B cell (primary cell): ENCODE measurements at regions of chr20 and their contacts with region 1.

Region 1: DNA sequence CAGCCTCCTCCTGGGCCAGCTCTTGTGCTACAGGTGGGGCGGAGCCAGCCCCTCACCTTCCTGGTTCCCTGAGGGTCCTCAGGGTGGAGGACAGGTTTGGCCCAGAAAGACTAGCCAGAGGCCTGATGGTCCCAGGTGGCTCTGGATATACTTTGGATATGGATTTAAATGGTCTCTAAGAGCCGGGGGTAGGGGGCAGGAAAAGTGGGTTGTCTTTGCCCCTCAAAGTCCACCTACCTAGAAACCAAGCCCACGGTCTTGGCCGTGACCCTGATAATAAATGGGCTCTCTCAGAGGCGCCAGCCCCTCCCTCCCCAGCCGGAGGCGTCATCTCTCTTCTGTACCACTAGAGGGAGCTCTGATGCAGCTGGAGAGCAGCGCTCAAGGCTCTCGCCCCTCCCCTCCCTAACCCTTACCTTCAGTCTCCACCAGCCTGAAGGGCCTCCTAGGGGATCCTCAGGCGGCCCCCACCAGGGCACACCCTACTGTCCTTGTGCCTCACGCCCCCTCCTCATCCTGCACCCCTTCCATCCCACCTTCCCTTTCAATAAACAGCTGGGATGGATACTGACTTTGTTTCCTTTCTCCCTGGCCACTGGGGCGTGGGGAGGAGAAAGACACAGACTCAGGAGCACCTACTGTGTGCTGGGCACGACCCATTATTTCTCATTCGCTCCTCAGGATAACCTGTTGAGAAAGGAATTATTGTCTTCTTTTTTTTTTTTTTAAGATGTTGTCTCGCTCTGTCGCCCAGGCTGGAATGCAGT is 7.6 kb downstream of the NRSN2 start:
- DNase-seq: peak; percentile 89
- ATAC-seq: peak; percentile 100
- H3K4me3 ChIP-seq: no peak overlapping the region
- H3K4me3 Mint-ChIP-seq: no peak overlapping the region
- H3K27ac ChIP-seq: no peak overlapping the region
- H3K27ac Mint-ChIP-seq: no peak overlapping the region
- H3K4me1 ChIP-seq: peaks cover 3 to 8% of the 10 kb centered on the region in 2 donors
- H3K4me1 Mint-ChIP-seq: peaks cover 11% of the 10 kb centered on the region
- H3K27me3 ChIP-seq: no peaks in the 10 kb centered on the region
- H3K27me3 Mint-ChIP-seq: no peaks in the 10 kb centered on the region
- CTCF ChIP-seq: peak; percentile 91

Region 2: DNA sequence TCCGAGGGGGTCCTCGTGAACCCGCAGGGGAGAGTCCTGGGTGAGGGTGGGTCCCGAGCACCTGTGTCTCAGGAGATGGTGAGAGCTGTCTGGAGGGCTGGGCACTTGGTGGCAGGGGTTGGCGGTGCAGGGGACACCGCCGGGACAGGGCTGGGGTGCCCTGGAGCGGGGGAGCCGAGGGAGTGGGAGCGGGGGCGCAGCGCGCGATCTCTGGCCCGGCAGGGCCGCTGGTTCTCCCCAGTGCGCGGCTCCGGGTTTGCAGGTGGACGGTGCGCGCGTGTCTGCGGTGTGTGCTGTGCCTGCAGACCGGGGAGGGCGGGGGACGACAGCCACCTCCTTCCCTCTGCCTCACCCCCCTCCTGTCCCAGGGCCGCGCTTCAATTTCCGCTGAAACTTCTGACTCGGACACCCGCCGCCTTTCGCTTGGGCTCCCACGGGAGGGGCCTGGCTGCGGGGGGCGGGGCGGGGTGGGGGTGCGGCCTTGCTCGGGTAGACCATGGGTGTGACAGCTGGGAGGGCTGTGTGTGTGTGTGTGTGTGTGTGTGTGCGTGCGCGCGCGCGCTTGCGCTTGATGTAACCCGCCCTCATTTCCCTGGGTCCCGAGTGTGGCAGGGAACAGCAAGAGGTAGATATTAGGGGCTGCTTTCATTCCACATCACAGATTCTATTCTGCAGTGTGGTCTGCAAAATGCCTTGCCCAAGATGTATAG is 27.3 kb after region 1 on chr20:
- CTCF ChIA-PET with region 1: interaction called, 10 read pairs
- POLR2A ChIA-PET with region 1: interaction called, 6 read pairs
- intact Hi-C with region 1: loop called (anchors 2 kb)
- DNase-seq: peak; percentile 85
- ATAC-seq: peak; percentile 78
- H3K4me3 ChIP-seq: peak overlapping the region; percentile 3 to 79 (median 74)
- H3K4me3 Mint-ChIP-seq: peak overlapping the region; percentile 83
- H3K27ac ChIP-seq: peak overlapping the region; percentile 41 to 83
- H3K27ac Mint-ChIP-seq: peak overlapping the region; percentile 87
- H3K4me1 ChIP-seq: peaks cover 9% of the 10 kb centered on the region in 2 donors
- H3K4me1 Mint-ChIP-seq: peaks cover 19% of the 10 kb centered on the region
- H3K27me3 ChIP-seq: no peaks in the 10 kb centered on the region
- H3K27me3 Mint-ChIP-seq: no peaks in the 10 kb centered on the region
- CTCF ChIP-seq: no peak

Region 3: DNA sequence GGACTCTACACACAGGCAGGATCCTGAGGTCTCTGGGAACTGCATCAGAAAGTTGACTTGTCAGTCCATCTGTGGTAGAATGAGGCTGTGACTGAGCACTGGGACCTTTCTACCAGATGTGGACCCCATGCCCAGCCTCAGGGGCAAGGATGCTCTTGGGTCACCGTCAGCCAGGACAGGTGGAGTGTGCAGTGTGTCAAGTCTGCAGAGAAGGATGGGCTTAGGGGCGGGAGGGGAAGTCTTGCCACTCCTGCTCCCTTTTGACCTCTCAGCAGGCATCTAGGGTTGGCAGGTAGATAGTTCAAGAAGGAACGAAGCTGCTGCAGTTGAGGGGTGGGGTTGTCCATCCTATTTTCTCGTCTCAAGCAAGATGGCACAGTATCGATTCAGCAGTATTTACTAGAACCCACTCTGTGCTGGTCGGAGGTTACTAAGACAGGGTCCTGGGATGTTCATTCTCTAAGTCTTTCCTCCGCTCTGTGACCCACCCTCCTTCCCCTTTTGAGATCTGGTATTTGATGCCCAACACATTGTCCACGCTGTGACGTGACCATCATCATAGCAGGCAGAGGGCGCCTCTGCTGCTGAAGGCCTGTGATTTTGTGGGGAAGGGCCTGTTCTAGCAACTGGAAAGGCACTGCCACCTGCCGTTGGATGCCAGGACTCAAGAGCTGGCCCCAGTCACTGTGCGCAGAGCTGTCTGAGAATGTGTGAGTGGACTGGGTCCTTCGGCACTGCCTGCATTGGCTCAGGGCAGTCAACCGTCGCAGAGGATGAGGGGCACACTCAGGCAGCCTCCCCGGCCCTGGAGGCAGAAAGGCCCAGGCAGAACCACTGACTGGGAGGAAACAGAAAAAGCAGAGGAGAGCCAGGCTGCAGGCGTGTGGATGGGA is 76.8 kb after region 1 on chr20:
- CTCF ChIA-PET with region 1: interaction called, 7 read pairs
- POLR2A ChIA-PET with region 1: no interaction called
- intact Hi-C with region 1: loop called (anchors 1 kb)
- DNase-seq: peak; percentile 30
- ATAC-seq: no peak
- H3K4me3 ChIP-seq: no peak overlapping the region
- H3K4me3 Mint-ChIP-seq: no peak overlapping the region
- H3K27ac ChIP-seq: no peak overlapping the region
- H3K27ac Mint-ChIP-seq: peak overlapping the region; percentile 73
- H3K4me1 ChIP-seq: peaks cover 10 to 23% of the 10 kb centered on the region in 2 donors
- H3K4me1 Mint-ChIP-seq: peaks cover 35% of the 10 kb centered on the region
- H3K27me3 ChIP-seq: no peaks in the 10 kb centered on the region
- H3K27me3 Mint-ChIP-seq: no peaks in the 10 kb centered on the region
- CTCF ChIP-seq: no peak

Region 4: DNA sequence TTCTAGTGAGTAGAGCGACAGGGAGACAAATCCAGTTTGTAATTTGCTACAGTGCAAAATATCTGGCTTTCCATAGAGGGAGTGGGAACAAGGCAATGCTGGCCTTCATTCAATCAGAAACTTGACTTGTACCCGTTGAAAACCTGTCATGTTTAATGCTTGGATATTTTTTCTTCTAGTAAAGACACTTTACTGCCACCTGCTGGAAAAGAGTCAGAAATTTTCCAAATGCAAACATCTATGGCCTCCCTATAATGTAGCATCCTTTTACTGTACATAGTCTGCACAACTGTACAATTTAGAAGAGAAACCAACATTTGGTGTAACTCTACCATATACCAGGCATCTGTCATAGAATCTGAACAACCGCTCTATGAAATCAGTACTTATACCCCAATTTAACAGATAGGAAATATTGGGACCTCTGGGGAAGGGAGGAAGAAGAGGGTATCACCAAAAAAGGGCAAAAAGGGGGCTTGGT is 124.5 kb after region 1 on chr20:
- CTCF ChIA-PET with region 1: interaction called, 169 read pairs
- POLR2A ChIA-PET with region 1: interaction called, 4 read pairs
- intact Hi-C with region 1: loop called (anchors 1 kb)
- DNase-seq: peak; percentile 79
- ATAC-seq: peak; percentile 64
- H3K4me3 ChIP-seq: no peak overlapping the region
- H3K4me3 Mint-ChIP-seq: no peak overlapping the region
- H3K27ac ChIP-seq: no peak overlapping the region
- H3K27ac Mint-ChIP-seq: peak overlapping the region; percentile 50
- H3K4me1 ChIP-seq: no peaks in the 10 kb centered on the region
- H3K4me1 Mint-ChIP-seq: peaks cover 2% of the 10 kb centered on the region
- H3K27me3 ChIP-seq: no peaks in the 10 kb centered on the region
- H3K27me3 Mint-ChIP-seq: no peaks in the 10 kb centered on the region
- CTCF ChIP-seq: peak; percentile 85

Region 5: DNA sequence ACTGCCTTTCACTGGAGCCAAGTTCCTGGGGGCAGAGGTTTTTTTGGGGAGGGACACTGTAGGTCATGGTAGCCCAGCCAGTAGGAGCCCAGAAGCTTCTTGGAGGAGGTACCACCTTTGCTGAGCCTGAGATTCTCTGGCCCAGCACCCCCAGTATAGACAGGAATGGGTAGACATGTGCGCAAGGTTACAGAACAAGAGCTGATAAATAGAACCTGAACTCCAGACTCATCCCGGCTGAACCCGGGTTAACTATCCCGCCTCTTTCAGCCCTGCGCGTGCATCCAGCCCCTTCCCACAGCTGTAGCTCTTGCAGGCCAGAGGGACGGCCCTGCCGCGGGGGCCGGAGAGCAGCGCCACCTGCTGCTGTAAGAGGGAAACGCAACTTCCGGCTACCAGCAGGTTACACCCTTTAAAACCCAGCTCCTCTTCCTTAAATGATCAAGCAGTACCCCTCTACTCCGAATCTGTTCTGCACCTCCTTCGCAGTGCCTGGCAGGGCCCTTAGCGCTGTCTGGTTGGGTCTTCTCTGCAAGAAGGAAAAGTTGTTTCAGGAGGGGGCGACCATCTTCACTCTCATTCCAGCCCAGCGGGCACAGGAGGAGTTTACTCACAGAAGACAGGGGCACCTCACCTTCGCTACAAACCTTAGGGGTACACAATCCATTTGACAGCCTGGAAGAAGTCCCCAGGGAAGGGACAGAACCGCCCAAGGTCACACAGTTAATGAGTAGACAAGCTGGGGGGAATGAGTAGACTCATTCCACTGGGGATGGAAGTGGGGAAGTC is 291.0 kb after region 1 on chr20:
- CTCF ChIA-PET with region 1: interaction called, 11 read pairs
- POLR2A ChIA-PET with region 1: no interaction called
- intact Hi-C with region 1: no loop called
- DNase-seq: peak; percentile 77
- ATAC-seq: peak; percentile 84
- H3K4me3 ChIP-seq: no peak overlapping the region
- H3K4me3 Mint-ChIP-seq: no peak overlapping the region
- H3K27ac ChIP-seq: no peak overlapping the region
- H3K27ac Mint-ChIP-seq: no peak overlapping the region
- H3K4me1 ChIP-seq: peaks cover 7 to 11% of the 10 kb centered on the region in 2 donors
- H3K4me1 Mint-ChIP-seq: peaks cover 8% of the 10 kb centered on the region
- H3K27me3 ChIP-seq: peaks cover 0 to 23% (median 9%) of the 10 kb centered on the region in 4 experiments
- H3K27me3 Mint-ChIP-seq: peaks cover 23% of the 10 kb centered on the region
- CTCF ChIP-seq: peak; percentile 97

Region 6: DNA sequence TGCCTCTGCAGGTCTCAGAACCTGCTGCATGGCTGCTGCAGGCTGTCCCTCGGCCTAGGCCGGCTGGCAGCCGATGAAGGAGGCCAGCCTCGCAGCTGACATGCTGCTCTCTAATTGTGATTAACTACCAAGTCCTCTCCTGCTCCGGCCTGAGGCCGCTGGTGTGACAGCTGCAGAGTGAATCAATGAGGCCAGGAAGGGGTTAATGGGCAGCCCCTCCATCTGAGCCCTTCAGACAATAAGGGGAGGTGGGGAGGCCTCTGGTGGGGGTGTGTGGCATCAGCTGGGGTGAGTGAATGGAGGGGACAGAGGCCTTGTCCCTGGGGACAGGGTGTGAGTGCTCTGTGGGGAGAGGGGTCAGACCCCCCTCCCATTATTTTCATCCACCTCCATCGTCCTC is 379.4 kb after region 1 on chr20:
- CTCF ChIA-PET with region 1: no interaction called
- POLR2A ChIA-PET with region 1: no interaction called
- intact Hi-C with region 1: loop called (anchors 10 kb)
- DNase-seq: no peak
- ATAC-seq: no peak
- H3K4me3 ChIP-seq: no peak overlapping the region
- H3K4me3 Mint-ChIP-seq: no peak overlapping the region
- H3K27ac ChIP-seq: no peak overlapping the region
- H3K27ac Mint-ChIP-seq: no peak overlapping the region
- H3K4me1 ChIP-seq: peaks cover 0 to 1% of the 10 kb centered on the region in 2 donors
- H3K4me1 Mint-ChIP-seq: peaks cover 1% of the 10 kb centered on the region
- H3K27me3 ChIP-seq: peaks cover 0 to 14% (median 5%) of the 10 kb centered on the region in 4 experiments
- H3K27me3 Mint-ChIP-seq: peaks cover 29% of the 10 kb centered on the region
- CTCF ChIP-seq: no peak

Region 7: DNA sequence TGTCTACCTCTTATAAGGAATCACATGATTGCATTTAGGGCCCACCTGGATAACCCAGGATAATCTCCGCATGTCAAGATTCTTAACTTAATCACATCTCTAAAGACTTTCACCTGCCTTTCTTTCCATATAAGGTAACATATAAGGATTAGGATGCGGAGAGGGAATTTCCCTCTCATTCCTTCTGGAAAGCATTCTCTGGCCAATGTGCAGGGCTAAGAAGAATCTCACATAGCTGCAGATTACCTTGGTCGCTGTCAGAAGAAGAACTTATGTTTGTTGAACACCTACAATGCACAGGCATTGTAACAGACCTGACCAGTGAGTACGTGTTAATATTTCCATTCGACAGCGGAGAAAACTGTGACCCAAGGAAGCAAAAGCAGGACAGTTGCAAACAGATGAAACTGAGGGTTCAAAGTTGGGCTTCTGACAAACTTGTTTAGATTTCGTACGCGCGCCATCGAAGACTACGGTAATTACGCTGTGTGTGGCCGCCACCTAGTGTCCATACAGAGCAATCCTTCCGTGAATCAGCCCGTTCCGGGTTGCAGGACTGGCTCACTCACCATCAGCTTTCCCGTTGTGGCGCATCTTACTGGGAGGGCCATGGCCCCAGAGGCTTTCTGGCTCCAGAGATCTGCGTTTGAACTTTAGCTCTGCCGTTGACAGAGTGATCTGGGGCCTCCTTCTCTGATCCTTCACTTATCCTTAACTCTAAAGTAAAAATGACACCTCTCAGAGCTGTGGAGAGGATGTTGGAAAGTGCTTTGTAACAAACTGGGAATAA is 858.3 kb after region 1 on chr20:
- CTCF ChIA-PET with region 1: no interaction called
- POLR2A ChIA-PET with region 1: no interaction called
- intact Hi-C with region 1: no loop called
- DNase-seq: peak; percentile 72
- ATAC-seq: peak; percentile 83
- H3K4me3 ChIP-seq: no peak overlapping the region
- H3K4me3 Mint-ChIP-seq: peak overlapping the region; percentile 18
- H3K27ac ChIP-seq: no peak overlapping the region
- H3K27ac Mint-ChIP-seq: no peak overlapping the region
- H3K4me1 ChIP-seq: peaks cover 0 to 3% of the 10 kb centered on the region in 2 donors
- H3K4me1 Mint-ChIP-seq: peaks cover 3% of the 10 kb centered on the region
- H3K27me3 ChIP-seq: peaks cover 0 to 15% (median 11%) of the 10 kb centered on the region in 4 experiments
- H3K27me3 Mint-ChIP-seq: peaks cover 46% of the 10 kb centered on the region
- CTCF ChIP-seq: peak; percentile 88